Right ventricle myocardium superior (tissue), 1 donor: ENCODE measurements at regions of chr20 and their contacts with region 1.

Region 1: DNA sequence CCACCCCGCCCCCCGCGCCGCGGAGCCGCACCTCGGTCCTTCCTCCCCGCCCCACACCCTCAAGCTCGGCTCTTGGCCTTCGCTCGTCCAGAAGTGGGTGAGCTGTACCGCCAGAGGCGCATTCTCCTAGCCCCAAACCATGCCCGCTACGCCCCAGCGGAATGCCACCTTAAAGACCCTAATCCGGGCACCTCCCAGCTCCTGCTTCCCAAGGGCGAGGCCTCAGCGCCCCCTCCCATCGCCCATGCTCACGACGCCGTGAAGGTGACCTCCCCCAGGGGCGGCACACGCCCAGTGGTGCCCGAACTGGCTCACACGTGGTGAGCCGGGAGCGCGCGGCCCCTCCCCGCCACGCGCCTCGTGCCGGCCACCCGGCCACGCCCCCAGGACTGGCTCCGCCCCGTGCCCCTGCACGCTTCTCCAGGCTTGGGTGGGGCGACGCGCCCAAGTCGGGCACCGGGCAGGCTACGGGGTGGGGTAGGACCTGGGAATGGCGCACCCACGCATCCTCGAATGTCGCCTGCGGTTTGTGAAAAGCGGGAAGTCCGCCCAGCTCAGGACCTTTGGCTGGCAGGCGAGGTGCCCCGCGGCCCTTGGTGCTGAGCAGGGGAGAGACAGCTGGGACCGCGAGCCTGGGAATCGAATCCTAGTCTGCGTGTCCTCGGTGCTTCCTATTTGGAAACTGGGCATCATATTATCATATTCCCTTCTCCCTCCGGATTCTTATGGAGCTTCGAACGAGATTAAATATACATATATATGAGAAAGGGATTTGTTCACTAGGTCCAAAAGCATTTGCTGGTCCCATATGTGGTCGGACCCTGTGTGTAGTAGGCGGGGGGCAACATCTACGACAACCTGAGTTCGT is 941 bp upstream of the SOX12 start:
- DNase-seq: peak; percentile 95
- ATAC-seq: peak; percentile 81

Region 2: GRCh38 chr20:278607-279571 is 45.5 kb before region 1 on chr20:
- intact Hi-C with region 1: loop called (anchors 10 kb)
- DNase-seq: peak; percentile 68
- ATAC-seq: peak; percentile 59

Region 3: DNA sequence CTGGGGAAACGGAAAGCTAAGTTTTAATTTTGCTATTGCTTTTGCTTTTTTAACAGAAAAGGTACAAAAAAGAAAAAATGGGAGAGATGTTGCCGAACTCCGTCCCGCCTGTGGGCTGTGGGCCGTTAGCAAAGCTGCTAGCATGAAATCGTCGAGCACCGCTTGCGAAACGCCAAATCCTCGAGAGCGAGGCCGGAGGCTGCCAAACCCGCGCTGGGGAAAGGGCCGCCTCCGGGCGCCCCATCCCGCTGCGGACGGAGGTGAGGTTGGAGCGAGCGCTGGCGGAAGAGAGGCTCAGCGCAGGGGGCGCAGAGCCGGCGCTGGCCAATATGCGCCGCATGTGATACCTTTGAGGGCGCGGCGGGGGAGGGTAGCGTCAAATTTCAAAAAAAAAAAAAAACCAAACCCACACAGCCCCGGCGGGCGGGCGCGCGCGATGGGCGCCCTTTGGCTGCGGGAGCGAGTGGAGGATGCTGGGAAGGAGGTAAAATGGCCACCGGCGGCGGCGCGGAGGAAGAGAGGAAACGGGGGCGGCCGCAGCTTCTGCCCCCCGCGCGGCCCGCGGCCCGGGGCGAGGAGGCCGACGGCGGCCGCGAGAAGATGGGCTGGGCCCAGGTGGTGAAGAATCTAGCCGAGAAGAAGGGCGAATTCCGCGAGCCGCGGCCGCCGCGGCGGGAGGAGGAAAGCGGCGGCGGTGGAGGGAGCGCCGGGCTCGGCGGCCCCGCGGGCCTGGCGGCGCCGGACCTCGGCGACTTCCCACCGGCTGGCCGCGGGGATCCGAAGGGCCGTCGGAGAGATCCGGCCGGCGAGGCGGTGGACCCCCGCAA is 27.1 kb before region 1 on chr20 and contains the start of gene ZCCHC3:
- intact Hi-C with region 1: loop called (anchors 2 kb)
- DNase-seq: peak; percentile 94
- ATAC-seq: peak; percentile 93
- total RNA-seq, gene ZCCHC3: 11.8 TPM